Activated naive CD4-positive, alpha-beta T cell treated with anti-CD3 and anti-CD28 coated beads for 36 hours (primary cell): ENCODE measurements at regions of chr1 and their contacts with region 1.

Region 1: GRCh38 chr1:53294567-53294966 is 33.3 kb downstream of the LRP8 start:
- DNase-seq: peak; percentile 80
- H3K4me3 Mint-ChIP-seq: no peak overlapping the region
- H3K27ac Mint-ChIP-seq: peak overlapping the region; percentile 41
- H3K4me1 Mint-ChIP-seq: peaks cover 27% of the 10 kb centered on the region
- H3K27me3 Mint-ChIP-seq: no peaks in the 10 kb centered on the region

Region 2: GRCh38 chr1:53278201-53278725 is 16.3 kb before region 1 on chr1:
- CTCF ChIA-PET with region 1: interaction called, 11 read pairs
- intact Hi-C with region 1: no loop called
- DNase-seq: peak; percentile 79
- H3K4me3 Mint-ChIP-seq: no peak overlapping the region
- H3K27ac Mint-ChIP-seq: no peak overlapping the region
- H3K4me1 Mint-ChIP-seq: peaks cover 2% of the 10 kb centered on the region
- H3K27me3 Mint-ChIP-seq: no peaks in the 10 kb centered on the region

Region 3: GRCh38 chr1:53367503-53368304 is 73.1 kb after region 1 on chr1:
- CTCF ChIA-PET with region 1: no interaction called
- intact Hi-C with region 1: loop called (anchors 1 kb)
- DNase-seq: peak; percentile 69
- H3K4me3 Mint-ChIP-seq: peak overlapping the region; percentile 71
- H3K27ac Mint-ChIP-seq: peak overlapping the region; percentile 54
- H3K4me1 Mint-ChIP-seq: peaks cover 19% of the 10 kb centered on the region
- H3K27me3 Mint-ChIP-seq: no peaks in the 10 kb centered on the region